ENCODE measurements at regions of chr3 and their contacts with region 1.

Region 1: GRCh38 chr3:52056968-52057805 is 816 bp upstream of the DUSP7 start:
- DNase-seq: peak; percentile 90 to 100 (median 99)
- ATAC-seq: peak; percentile 93
- H3K4me3 ChIP-seq: peak overlapping the region; percentile 92
- H3K4me3 Mint-ChIP-seq: peak overlapping the region; percentile 90 to 97 (median 94)
- H3K27ac ChIP-seq: peak overlapping the region; percentile 79
- H3K27ac Mint-ChIP-seq: peak overlapping the region; percentile 78 to 97 (median 93)
- H3K4me1 ChIP-seq: peaks cover 34 to 35% of the 10 kb centered on the region in 2 donors
- H3K4me1 Mint-ChIP-seq: peaks cover 26 to 39% (median 26%) of the 10 kb centered on the region in 7 donors
- H3K27me3 ChIP-seq: no peaks in the 10 kb centered on the region
- H3K27me3 Mint-ChIP-seq: peaks cover 0 to 4% (median 0%) of the 10 kb centered on the region in 5 donors

Region 2: GRCh38 chr3:50568947-50569749 is 1488.0 kb before region 1 on chr3 and contains the start of gene HEMK1:
- CTCF ChIA-PET with region 1: no interaction called
- POLR2A ChIA-PET with region 1: no interaction called
- intact Hi-C with region 1: loop called in 1 of 2 experiments (anchors 2 kb)
- DNase-seq: peak; percentile 71 to 95 (median 90)
- ATAC-seq: peak; percentile 81
- H3K4me3 ChIP-seq: peak within 1 kb of the TSS; percentile 97
- H3K4me3 Mint-ChIP-seq: peak within 1 kb of the TSS; percentile 86 to 99 (median 96)
- H3K27ac ChIP-seq: peak within 1 kb of the TSS; percentile 84
- H3K27ac Mint-ChIP-seq: peak within 1 kb of the TSS; percentile 90 to 98 (median 93)
- H3K4me1 ChIP-seq: peaks cover 49 to 57% of the 10 kb centered on the region in 2 donors
- H3K4me1 Mint-ChIP-seq: peaks cover 37 to 75% (median 71%) of the 10 kb centered on the region in 7 donors
- H3K27me3 ChIP-seq: no peaks in the 10 kb centered on the region
- H3K27me3 Mint-ChIP-seq: no peaks in the 10 kb centered on the region
- total RNA-seq, gene HEMK1: 32.1 to 71.1 (median 66.1) TPM

Region 3: GRCh38 chr3:51670823-51671733 is 386.1 kb before region 1 on chr3 and contains the start of gene TEX264:
- CTCF ChIA-PET with region 1: no interaction called
- POLR2A ChIA-PET with region 1: no interaction called
- intact Hi-C with region 1: loop called (anchors 2 to 5 kb)
- DNase-seq: peak; percentile 90 to 98 (median 95)
- ATAC-seq: peak; percentile 90
- H3K4me3 ChIP-seq: peak within 1 kb of the TSS; percentile 94
- H3K4me3 Mint-ChIP-seq: peak within 1 kb of the TSS; percentile 89 to 95 (median 92)
- H3K27ac ChIP-seq: peak within 1 kb of the TSS; percentile 85
- H3K27ac Mint-ChIP-seq: peak within 1 kb of the TSS; percentile 24 to 97 (median 93)
- H3K4me1 ChIP-seq: peaks cover 53 to 60% of the 10 kb centered on the region in 2 donors
- H3K4me1 Mint-ChIP-seq: peaks cover 59 to 82% (median 73%) of the 10 kb centered on the region in 7 donors
- H3K27me3 ChIP-seq: no peaks in the 10 kb centered on the region
- H3K27me3 Mint-ChIP-seq: no peaks in the 10 kb centered on the region
- total RNA-seq, gene TEX264: 34.4 to 65.0 (median 41.7) TPM

Region 4: GRCh38 chr3:52001443-52001974 is 55.7 kb before region 1 on chr3:
- CTCF ChIA-PET with region 1: interaction called, 70 read pairs
- POLR2A ChIA-PET with region 1: interaction called, 33 read pairs
- intact Hi-C with region 1: loop called (anchors 1 kb)
- DNase-seq: peak; percentile 73 to 86 (median 81)
- ATAC-seq: peak; percentile 98
- H3K4me3 ChIP-seq: no peak overlapping the region
- H3K4me3 Mint-ChIP-seq: peak overlapping the region in 2 of 10 donors; percentile 12 to 16
- H3K27ac ChIP-seq: no peak overlapping the region
- H3K27ac Mint-ChIP-seq: peak overlapping the region in 3 of 9 donors; percentile 8 to 41 (median 11)
- H3K4me1 ChIP-seq: peaks cover 6 to 22% of the 10 kb centered on the region in 2 donors
- H3K4me1 Mint-ChIP-seq: peaks cover 6 to 24% (median 16%) of the 10 kb centered on the region in 7 donors
- H3K27me3 ChIP-seq: no peaks in the 10 kb centered on the region
- H3K27me3 Mint-ChIP-seq: peaks cover 0 to 16% (median 0%) of the 10 kb centered on the region in 5 donors

Region 5: DNA sequence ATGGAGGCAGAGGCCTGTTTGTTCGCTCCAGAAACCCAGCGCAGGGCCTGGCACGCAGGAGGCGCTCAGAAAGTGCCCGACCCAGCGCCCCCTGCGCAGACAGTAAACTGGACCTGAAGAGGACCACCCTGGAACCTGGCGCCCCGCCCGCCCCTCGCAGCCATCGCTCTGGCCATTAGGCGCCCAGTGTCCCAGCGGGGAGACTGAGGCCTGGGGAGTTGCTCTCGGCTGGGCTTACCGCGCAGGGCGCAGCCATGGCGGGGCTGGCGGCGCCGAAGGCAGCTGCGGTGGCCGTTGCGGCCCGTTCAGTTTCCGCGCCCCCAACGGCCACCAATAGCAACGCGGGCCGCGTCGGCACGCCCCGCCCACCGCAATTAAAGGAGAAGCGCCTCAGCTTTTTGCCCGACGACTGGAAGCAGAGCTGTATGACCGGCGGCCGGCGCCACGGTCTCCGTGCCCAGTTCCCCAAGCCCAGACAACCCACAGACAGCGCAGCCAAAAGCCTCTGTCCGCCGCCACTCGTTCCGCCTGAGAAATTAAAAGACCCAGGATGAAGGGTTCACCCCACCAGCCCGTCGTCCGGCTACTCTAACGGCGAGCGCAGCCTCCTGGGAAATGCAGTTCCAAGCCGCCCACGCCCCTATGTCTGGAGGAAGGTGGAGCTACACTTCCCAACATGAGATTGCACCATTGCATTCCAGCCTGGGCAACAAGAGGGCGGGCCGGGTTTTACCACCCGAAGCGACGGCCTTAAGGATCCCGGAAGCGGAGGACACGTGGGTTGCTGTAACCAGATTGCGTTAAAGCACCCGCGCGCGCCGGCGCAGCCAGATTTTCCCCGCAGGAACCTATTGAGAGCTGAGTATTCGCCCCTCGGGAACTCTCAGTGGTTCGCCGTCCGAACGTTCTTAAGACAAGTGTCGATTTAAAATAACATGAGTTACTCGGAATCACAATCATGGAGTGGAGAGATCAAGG is 97.2 kb after region 1 on chr3 and contains the start of gene POC1A:
- CTCF ChIA-PET with region 1: no interaction called
- POLR2A ChIA-PET with region 1: interaction called, 16 read pairs
- intact Hi-C with region 1: loop called (anchors 1 kb)
- DNase-seq: peak; percentile 73 to 90 (median 82)
- ATAC-seq: peak; percentile 92
- H3K4me3 ChIP-seq: peak within 1 kb of the TSS; percentile 98
- H3K4me3 Mint-ChIP-seq: peak within 1 kb of the TSS; percentile 88 to 98 (median 96)
- H3K27ac ChIP-seq: peak within 1 kb of the TSS; percentile 85
- H3K27ac Mint-ChIP-seq: peak within 1 kb of the TSS; percentile 87 to 98 (median 94)
- H3K4me1 ChIP-seq: peaks cover 4 to 6% of the 10 kb centered on the region in 2 donors
- H3K4me1 Mint-ChIP-seq: peaks cover 5 to 22% (median 6%) of the 10 kb centered on the region in 7 donors
- H3K27me3 ChIP-seq: no peaks in the 10 kb centered on the region
- H3K27me3 Mint-ChIP-seq: peaks cover 0 to 1% (median 0%) of the 10 kb centered on the region in 5 donors
- total RNA-seq, gene POC1A: 0.58 to 19.7 (median 1.2) TPM

Region 6: GRCh38 chr3:52278510-52279069 is 221.4 kb after region 1 on chr3 and contains the start of gene WDR82:
- CTCF ChIA-PET with region 1: no interaction called
- POLR2A ChIA-PET with region 1: interaction called, 4 read pairs
- intact Hi-C with region 1: loop called (anchors 2 to 5 kb)
- DNase-seq: peak; percentile 92 to 100 (median 96)
- ATAC-seq: peak; percentile 93
- H3K4me3 ChIP-seq: peak within 1 kb of the TSS; percentile 92
- H3K4me3 Mint-ChIP-seq: peak within 1 kb of the TSS; percentile 91 to 99 (median 98)
- H3K27ac ChIP-seq: peak within 1 kb of the TSS; percentile 96
- H3K27ac Mint-ChIP-seq: peak within 1 kb of the TSS; percentile 93 to 99 (median 99)
- H3K4me1 ChIP-seq: peaks cover 41 to 44% of the 10 kb centered on the region in 2 donors
- H3K4me1 Mint-ChIP-seq: peaks cover 37 to 74% (median 71%) of the 10 kb centered on the region in 7 donors
- H3K27me3 ChIP-seq: no peaks in the 10 kb centered on the region
- H3K27me3 Mint-ChIP-seq: no peaks in the 10 kb centered on the region
- total RNA-seq, gene WDR82: 112 to 161 (median 135) TPM

Region 7: GRCh38 chr3:52705688-52706686 is 648.8 kb after region 1 on chr3 and contains the starts of genes GLT8D1 and SPCS1:
- CTCF ChIA-PET with region 1: no interaction called
- POLR2A ChIA-PET with region 1: no interaction called
- intact Hi-C with region 1: loop called in 1 of 2 experiments (anchors 10 kb)
- DNase-seq: peak; percentile 83 to 96 (median 91)
- ATAC-seq: peak; percentile 94
- H3K4me3 ChIP-seq: peak within 1 kb of the TSS; percentile 97
- H3K4me3 Mint-ChIP-seq: peak within 1 kb of the TSS; percentile 89 to 96 (median 94)
- H3K27ac ChIP-seq: peak within 1 kb of the TSS; percentile 93
- H3K27ac Mint-ChIP-seq: peak within 1 kb of the TSS; percentile 90 to 97 (median 95)
- H3K4me1 ChIP-seq: peaks cover 25 to 33% of the 10 kb centered on the region in 2 donors
- H3K4me1 Mint-ChIP-seq: peaks cover 21 to 46% (median 40%) of the 10 kb centered on the region in 7 donors
- H3K27me3 ChIP-seq: no peaks in the 10 kb centered on the region
- H3K27me3 Mint-ChIP-seq: no peaks in the 10 kb centered on the region
- total RNA-seq, gene GLT8D1: 18.9 to 47.7 (median 45.2) TPM
- total RNA-seq, gene SPCS1: 55.0 to 95.3 (median 78.2) TPM